ENCODE measurements at regions of chr15 and their contacts with region 1.

Region 1: DNA sequence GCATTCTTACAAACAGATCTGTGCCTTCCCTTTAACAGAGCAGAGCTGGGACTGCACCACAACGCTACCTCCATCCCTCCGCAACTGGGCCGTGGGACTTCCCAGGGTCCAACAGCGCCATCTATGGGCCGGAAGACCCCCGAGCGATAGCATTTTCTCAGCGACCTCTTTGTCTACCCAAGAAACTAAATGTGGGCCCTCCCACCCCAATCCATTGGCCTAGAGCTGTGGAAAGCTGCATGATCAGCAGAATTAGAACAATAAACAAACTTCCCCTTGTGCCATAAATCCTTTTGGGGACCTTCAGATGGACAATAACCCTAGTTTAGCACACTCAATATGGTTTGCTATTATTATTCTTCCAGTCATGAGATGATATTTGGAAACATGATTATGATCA is 74.7 kb upstream of the NTRK3 start:
- DNase-seq: peak; percentile 91
- ATAC-seq: peak; percentile 97
- H3K4me3 Mint-ChIP-seq: no peak overlapping the region
- H3K27ac Mint-ChIP-seq: no peak overlapping the region
- H3K4me1 Mint-ChIP-seq: no peaks in the 10 kb centered on the region
- H3K27me3 Mint-ChIP-seq: no peaks in the 10 kb centered on the region; the same call in 1 of the 2 replicates
- CTCF ChIP-seq: peak; percentile 77

Region 2: GRCh38 chr15:88246666-88247446 is 84.4 kb before region 1 on chr15:
- CTCF ChIA-PET with region 1: interaction called, 39 read pairs
- POLR2A ChIA-PET with region 1: no interaction called
- DNase-seq: peak; percentile 84
- ATAC-seq: peak; percentile 89
- H3K4me3 Mint-ChIP-seq: peak overlapping the region; percentile 52
- H3K27ac Mint-ChIP-seq: no peak overlapping the region
- H3K4me1 Mint-ChIP-seq: peaks cover 17% of the 10 kb centered on the region
- H3K27me3 Mint-ChIP-seq: peaks cover 3% of the 10 kb centered on the region; the same call in 1 of the 2 replicates
- CTCF ChIP-seq: peak; percentile 94

Region 3: GRCh38 chr15:88274553-88275460 is 56.5 kb before region 1 on chr15:
- CTCF ChIA-PET with region 1: interaction called, 35 read pairs
- POLR2A ChIA-PET with region 1: no interaction called
- DNase-seq: peak; percentile 87
- ATAC-seq: peak; percentile 94
- H3K4me3 Mint-ChIP-seq: no peak overlapping the region
- H3K27ac Mint-ChIP-seq: no peak overlapping the region
- H3K4me1 Mint-ChIP-seq: no peaks in the 10 kb centered on the region
- H3K27me3 Mint-ChIP-seq: peaks cover 10% of the 10 kb centered on the region
- CTCF ChIP-seq: peak; percentile 87

Region 4: GRCh38 chr15:88321269-88321668 is 10.0 kb before region 1 on chr15:
- CTCF ChIA-PET with region 1: interaction called, 10 read pairs
- POLR2A ChIA-PET with region 1: no interaction called
- DNase-seq: no peak
- ATAC-seq: no peak
- H3K4me3 Mint-ChIP-seq: no peak overlapping the region
- H3K27ac Mint-ChIP-seq: no peak overlapping the region
- H3K4me1 Mint-ChIP-seq: peaks cover 3% of the 10 kb centered on the region; the same call in 1 of the 2 replicates
- H3K27me3 Mint-ChIP-seq: peaks cover 2% of the 10 kb centered on the region; the same call in 1 of the 2 replicates
- CTCF ChIP-seq: no peak

Region 5: GRCh38 chr15:88440021-88440420 is 108.7 kb after region 1 on chr15:
- CTCF ChIA-PET with region 1: interaction called, 14 read pairs
- POLR2A ChIA-PET with region 1: no interaction called
- DNase-seq: no peak
- ATAC-seq: no peak
- H3K4me3 Mint-ChIP-seq: no peak overlapping the region
- H3K27ac Mint-ChIP-seq: no peak overlapping the region
- H3K4me1 Mint-ChIP-seq: peaks cover 7% of the 10 kb centered on the region; the same call in 1 of the 2 replicates
- H3K27me3 Mint-ChIP-seq: peaks cover 22% of the 10 kb centered on the region
- CTCF ChIP-seq: no peak